Mammary epithelial cell (primary cell): ENCODE measurements at regions of chr16 and their contacts with region 1.

Region 1: DNA sequence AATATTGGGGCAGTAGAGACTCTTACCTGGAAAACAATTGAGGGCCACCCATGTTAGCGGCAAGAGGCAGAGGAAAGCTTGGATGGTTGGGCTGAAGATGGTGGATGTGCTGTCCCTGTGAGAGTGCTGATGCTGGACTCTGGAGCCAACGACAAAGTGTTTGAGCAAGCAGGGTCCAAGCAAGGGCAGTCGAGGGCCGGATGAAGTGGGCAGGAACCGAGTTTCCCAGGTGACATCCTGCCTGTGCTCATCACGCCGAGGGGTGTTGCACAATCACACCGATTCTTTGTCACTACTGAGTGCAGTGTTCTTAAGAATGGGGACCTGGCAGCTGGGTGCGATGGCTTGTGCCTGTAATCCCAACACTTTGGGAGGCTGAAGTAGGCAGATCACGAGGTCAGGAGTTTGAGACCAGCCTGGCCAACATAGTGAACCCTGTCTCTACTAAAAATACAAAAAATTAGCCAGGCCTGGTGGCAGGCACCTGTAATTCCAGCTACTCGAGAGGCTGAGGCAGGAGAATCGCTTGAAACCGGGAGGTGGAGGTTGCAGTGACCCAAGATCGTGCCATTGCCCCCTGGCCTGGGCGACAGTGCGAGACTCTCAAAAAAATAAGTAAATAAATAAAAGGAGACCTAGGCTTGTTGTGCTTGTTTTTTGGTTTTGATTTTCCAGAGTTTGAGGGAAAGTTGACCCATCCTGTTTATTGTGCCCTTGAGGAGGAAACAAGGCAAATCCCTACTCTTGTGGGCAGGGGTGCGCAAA is 6.1 kb downstream of the PYCARD start:
- DNase-seq: no peak
- H3K4me3 ChIP-seq: no peak overlapping the region
- H3K27ac ChIP-seq: no peak overlapping the region
- H3K4me1 ChIP-seq: peaks cover 7% of the 10 kb centered on the region
- H3K27me3 ChIP-seq: no peaks in the 10 kb centered on the region
- CTCF ChIP-seq: no peak

Region 2: DNA sequence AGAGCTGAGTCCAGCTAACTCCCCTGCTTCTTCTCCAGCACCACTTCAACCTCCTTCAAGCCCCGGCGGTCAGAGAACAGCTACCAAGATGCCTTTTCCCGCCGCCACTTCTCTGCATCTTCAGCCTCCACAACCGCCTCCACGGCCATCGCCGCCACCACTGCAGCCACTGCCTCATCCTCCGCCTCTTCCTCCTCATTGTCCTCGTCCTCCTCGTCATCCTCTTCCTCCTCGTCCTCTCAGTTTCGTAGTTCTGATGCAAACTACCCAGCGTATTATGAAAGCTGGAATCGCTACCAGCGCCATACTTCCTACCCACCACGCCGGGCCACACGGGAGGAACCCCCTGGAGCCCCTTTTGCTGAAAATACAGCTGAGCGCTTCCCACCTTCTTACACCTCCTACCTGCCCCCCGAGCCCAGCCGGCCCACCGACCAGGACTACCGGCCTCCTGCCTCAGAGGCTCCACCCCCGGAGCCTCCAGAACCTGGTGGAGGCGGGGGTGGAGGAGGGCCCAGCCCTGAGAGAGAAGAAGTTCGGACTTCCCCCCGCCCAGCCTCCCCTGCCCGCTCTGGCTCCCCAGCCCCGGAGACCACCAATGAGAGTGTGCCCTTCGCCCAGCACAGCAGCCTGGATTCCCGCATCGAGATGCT is 231.8 kb before region 1 on chr16:
- CTCF ChIA-PET with region 1: no interaction called
- dilution Hi-C with region 1: loop called (anchors 5 kb)
- in situ Hi-C with region 1: no loop called
- intact Hi-C with region 1: no loop called
- DNase-seq: no peak
- H3K4me3 ChIP-seq: no peak overlapping the region
- H3K27ac ChIP-seq: no peak overlapping the region
- H3K4me1 ChIP-seq: no peaks in the 10 kb centered on the region
- H3K27me3 ChIP-seq: no peaks in the 10 kb centered on the region
- CTCF ChIP-seq: no peak

Region 3: GRCh38 chr16:31168848-31169247 is 27.7 kb before region 1 on chr16:
- CTCF ChIA-PET with region 1: no interaction called
- dilution Hi-C with region 1: no loop called
- in situ Hi-C with region 1: no loop called
- intact Hi-C with region 1: no loop called
- DNase-seq: no peak
- H3K4me3 ChIP-seq: no peak overlapping the region
- H3K27ac ChIP-seq: no peak overlapping the region
- H3K4me1 ChIP-seq: no peaks in the 10 kb centered on the region
- H3K27me3 ChIP-seq: no peaks in the 10 kb centered on the region
- CTCF ChIP-seq: no peak

Region 4: DNA sequence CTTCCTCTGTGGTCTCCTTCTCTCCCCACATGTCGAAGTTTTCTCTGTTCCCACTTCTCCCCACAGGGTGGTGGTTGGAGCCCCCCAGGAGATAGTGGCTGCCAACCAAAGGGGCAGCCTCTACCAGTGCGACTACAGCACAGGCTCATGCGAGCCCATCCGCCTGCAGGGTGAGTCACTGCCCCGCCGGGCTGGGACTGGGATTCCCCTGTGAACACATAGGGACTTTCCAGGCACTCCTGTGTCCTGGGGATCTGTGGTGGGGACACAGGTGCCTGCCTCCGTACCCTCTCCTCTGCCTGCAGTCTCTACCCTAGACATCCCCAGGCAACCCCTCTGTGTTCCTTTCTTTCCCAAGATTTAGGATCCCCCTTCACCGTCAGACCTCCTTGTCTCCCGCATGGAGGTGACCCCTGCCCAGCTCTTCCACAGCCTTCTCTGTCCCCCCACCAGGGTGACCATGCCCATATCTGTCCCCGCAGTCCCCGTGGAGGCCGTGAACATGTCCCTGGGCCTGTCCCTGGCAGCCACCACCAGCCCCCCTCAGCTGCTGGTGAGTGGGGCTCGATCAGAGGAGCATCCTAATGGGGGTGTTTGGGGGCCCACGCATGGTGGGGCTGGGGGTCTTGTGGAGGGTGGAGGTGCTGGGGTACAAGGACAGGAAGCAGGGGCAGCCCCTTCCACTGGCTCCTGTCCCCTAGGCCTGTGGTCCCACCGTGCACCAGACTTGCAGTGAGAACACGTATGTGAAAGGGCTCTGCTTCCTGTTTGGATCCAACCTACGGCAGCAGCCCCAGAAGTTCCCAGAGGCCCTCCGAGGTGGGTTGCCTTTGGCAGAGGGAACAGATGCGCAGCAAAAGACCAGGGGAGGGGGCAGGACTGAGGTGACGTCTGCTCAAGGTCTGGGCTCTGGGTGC is 69.1 kb after region 1 on chr16:
- CTCF ChIA-PET with region 1: no interaction called
- dilution Hi-C with region 1: loop called (anchors 5 kb)
- in situ Hi-C with region 1: no loop called
- intact Hi-C with region 1: no loop called
- DNase-seq: peak; percentile 90
- H3K4me3 ChIP-seq: no peak overlapping the region
- H3K27ac ChIP-seq: peak overlapping the region; percentile 56
- H3K4me1 ChIP-seq: peaks cover 14% of the 10 kb centered on the region
- H3K27me3 ChIP-seq: no peaks in the 10 kb centered on the region
- CTCF ChIP-seq: peak in 1 of 2 donors; percentile 23

Region 5: DNA sequence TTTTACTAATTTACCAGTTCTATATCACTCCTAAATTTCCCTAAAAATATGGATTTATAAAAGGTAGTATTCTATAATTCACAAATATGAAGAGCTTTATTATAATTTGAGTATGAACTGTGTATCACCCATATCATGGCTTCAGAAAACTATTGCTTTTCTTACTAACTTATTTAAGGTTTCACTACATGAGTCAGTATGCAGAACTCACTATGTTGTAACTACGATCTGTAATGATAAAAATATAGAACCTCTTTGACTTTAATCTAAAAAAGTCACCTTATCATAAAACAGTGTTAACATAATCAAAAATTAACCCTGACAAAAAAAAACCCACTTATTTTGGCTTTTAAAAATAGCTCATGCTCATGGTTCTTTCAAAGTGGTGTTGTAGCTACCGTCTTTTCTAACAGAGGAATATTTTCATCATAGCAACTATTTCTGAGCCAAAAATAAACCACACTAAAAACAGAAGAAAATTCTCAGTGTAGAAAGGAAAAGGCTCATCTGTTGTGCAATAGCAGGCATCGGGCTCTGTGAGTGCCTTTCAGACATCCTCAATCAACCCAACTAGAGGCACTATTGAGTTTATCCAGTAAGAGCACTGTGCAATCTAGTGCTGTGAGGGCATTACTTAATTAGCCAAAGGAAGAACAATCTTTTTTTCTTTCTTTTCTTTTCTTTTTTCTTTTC is 105.3 kb after region 1 on chr16:
- CTCF ChIA-PET with region 1: no interaction called
- dilution Hi-C with region 1: loop called (anchors 5 kb)
- in situ Hi-C with region 1: no loop called
- intact Hi-C with region 1: no loop called
- DNase-seq: peak; percentile 26
- H3K4me3 ChIP-seq: no peak overlapping the region
- H3K27ac ChIP-seq: no peak overlapping the region
- H3K4me1 ChIP-seq: no peaks in the 10 kb centered on the region
- H3K27me3 ChIP-seq: no peaks in the 10 kb centered on the region
- CTCF ChIP-seq: peak in 1 of 2 donors; percentile 5